ENCODE measurements at regions of chr11 and their contacts with region 1.

Region 1: DNA sequence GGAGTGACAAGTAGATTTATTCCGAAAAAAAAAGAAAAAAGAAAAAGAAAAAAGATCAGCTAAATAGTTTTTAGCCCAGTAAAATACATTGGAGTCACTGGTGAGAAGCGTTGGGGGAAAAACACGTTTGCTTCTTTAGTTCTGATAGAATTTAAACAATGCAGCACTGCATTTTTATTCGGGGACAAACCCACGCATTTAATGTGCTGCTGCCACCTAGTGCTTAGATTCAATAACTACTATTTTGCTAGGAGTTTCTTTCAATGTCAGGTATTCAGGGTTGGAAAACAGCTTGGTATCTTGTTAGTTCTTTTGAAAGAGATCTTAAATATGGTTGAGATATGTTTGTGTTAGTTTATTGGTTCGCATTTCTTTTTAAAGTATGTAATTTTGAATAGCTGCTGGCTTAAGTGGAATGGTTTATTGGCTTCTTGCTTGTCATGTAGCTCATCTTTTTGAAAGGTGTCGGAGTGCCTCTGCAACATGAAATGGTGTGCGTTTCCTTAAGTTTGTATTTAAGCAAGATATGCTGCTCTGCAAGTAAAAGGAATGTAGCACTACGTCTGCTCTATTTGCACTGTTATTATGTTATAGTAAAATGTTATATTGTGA is 41.9 kb downstream of the SVIP start:
- DNase-seq: peak; percentile 49
- H3K4me3 Mint-ChIP-seq: no peak overlapping the region
- H3K27ac Mint-ChIP-seq: no peak overlapping the region
- H3K4me1 Mint-ChIP-seq: no peaks in the 10 kb centered on the region
- H3K27me3 Mint-ChIP-seq: no peaks in the 10 kb centered on the region

Region 2: DNA sequence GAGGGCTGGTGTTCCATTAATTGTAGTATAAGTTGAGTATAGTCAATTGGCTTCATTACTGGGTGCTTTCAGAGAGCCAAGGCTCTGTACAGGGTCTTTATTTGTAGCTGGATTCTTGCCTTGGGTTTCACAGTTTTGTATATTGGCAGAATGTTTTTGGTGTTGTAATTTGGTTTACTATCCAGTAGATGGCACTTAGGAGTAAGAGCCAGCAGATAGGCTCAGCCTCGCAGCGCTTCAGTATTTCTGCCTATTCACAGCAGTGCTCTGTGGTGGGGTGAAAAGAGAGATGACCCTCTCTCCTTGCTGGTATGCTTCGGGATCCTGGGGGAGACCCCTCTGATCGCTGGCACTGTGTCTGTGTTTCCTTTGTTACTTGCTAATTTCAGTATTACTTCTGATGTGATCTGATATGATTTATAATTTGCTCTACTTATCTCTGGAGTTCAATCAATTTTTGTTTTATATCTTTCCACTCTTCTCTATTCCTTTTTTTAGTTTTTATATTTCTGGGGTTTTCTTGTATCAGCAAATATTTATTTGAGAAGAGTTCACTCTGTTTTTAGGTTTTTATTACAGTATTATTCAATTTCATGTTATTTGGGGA is 542.6 kb before region 1 on chr11:
- CTCF ChIA-PET with region 1: interaction called, 4 read pairs
- intact Hi-C with region 1: loop called (anchors 1 kb)
- DNase-seq: peak; percentile 22
- H3K4me3 Mint-ChIP-seq: no peak overlapping the region
- H3K27ac Mint-ChIP-seq: no peak overlapping the region
- H3K4me1 Mint-ChIP-seq: no peaks in the 10 kb centered on the region
- H3K27me3 Mint-ChIP-seq: peaks cover 24% of the 10 kb centered on the region

Region 3: DNA sequence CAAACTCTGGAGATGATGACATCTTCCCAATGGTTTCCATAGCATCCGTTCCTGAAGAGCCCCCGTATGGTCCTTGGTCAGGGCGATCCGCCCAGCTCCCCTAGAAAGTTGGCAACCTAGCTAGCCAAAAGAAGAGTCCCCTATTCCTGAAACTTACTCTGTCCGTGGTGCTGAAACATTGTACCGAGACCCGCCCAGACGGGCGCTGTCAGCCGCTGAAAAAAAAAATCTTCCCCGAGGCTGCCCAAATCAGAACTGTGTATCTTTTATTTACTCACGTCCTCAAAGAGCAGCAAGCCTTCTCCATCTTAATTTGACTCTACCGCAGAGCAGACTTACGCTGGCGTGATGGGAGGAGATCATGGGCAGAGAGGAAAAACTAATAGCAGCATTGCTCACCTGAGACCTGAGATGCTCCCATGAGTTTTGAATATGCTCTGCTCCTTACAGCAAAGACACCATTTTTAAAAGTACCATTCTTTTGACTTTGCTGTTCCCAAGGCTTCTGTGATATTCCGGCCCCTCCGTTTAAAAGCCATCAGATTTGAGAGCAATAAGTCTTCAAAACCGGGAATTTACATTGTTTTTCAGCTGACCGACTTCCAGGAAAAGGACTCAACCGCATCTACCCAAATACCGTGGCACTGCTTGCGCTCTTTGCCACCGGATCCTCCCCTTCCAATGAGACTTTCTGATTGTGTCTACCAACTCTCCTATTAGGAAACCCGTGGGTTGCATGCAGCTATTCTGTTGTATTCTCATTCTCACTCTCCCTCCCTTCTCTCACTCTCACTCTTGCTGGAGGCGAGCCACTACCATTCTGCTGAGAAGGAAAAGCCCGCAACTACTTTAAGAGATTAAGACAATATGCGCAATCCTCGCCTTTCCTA is 449.8 kb before region 1 on chr11 and contains the start of gene SLC17A6:
- CTCF ChIA-PET with region 1: interaction called, 10 read pairs
- intact Hi-C with region 1: loop called (anchors 1 kb)
- DNase-seq: peak; percentile 25
- H3K4me3 Mint-ChIP-seq: no peak within 1 kb of the TSS
- H3K27ac Mint-ChIP-seq: no peak within 1 kb of the TSS
- H3K4me1 Mint-ChIP-seq: peaks cover 22% of the 10 kb centered on the region
- H3K27me3 Mint-ChIP-seq: peaks cover 59% of the 10 kb centered on the region
- total RNA-seq, gene SLC17A6: not detected

Region 4: DNA sequence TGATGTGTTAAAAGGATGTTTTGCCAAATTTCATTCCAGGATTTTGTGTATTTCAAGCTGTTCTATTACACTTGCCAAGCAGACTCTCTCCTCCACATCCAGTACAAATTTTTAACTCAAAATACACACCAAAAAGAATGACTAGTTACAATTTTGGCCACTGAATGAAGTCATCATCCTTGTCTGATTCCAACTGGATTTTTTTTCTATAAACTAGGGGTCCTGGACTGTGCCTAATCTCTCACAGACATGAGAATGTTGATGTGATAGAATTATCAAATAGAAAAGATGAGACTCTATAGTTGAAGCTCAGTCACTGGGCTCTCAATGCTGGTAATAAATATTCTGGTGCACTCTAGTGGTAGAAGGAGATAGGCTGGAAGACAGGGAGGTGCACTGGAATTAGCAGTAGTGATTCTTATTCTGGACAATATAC is 247.8 kb before region 1 on chr11:
- CTCF ChIA-PET with region 1: no interaction called
- intact Hi-C with region 1: loop called (anchors 10 kb)
- DNase-seq: no peak
- H3K4me3 Mint-ChIP-seq: no peak overlapping the region
- H3K27ac Mint-ChIP-seq: no peak overlapping the region
- H3K4me1 Mint-ChIP-seq: no peaks in the 10 kb centered on the region
- H3K27me3 Mint-ChIP-seq: peaks cover 20% of the 10 kb centered on the region

Region 5: GRCh38 chr11:22670830-22671229 is 116.8 kb before region 1 on chr11:
- CTCF ChIA-PET with region 1: interaction called, 18 read pairs
- intact Hi-C with region 1: loop called (anchors 1 kb)
- DNase-seq: no peak
- H3K4me3 Mint-ChIP-seq: no peak overlapping the region
- H3K27ac Mint-ChIP-seq: no peak overlapping the region
- H3K4me1 Mint-ChIP-seq: peaks cover 17% of the 10 kb centered on the region
- H3K27me3 Mint-ChIP-seq: peaks cover 47% of the 10 kb centered on the region

Region 6: DNA sequence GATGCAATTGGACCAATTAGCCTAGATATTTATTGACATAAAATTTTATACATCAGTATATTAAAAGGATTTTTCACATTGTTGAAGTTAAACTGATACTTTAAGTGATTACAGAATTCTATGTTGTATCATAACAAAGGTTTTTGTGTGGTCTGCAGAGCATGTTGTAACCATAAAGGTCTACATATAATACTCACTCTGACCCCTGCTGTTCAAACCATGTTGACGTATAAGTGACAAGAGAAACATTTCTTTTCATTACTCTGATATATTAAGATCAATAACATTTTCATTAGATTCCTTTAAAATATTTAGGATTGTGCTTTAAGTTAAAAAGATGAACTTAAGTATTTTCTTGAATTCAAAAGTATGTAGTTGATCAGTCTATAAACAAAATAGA is 57.3 kb before region 1 on chr11:
- CTCF ChIA-PET with region 1: interaction called, 6 read pairs
- intact Hi-C with region 1: loop called (anchors 5 kb)
- DNase-seq: peak; percentile 11
- H3K4me3 Mint-ChIP-seq: no peak overlapping the region
- H3K27ac Mint-ChIP-seq: no peak overlapping the region
- H3K4me1 Mint-ChIP-seq: no peaks in the 10 kb centered on the region
- H3K27me3 Mint-ChIP-seq: no peaks in the 10 kb centered on the region

Region 7: DNA sequence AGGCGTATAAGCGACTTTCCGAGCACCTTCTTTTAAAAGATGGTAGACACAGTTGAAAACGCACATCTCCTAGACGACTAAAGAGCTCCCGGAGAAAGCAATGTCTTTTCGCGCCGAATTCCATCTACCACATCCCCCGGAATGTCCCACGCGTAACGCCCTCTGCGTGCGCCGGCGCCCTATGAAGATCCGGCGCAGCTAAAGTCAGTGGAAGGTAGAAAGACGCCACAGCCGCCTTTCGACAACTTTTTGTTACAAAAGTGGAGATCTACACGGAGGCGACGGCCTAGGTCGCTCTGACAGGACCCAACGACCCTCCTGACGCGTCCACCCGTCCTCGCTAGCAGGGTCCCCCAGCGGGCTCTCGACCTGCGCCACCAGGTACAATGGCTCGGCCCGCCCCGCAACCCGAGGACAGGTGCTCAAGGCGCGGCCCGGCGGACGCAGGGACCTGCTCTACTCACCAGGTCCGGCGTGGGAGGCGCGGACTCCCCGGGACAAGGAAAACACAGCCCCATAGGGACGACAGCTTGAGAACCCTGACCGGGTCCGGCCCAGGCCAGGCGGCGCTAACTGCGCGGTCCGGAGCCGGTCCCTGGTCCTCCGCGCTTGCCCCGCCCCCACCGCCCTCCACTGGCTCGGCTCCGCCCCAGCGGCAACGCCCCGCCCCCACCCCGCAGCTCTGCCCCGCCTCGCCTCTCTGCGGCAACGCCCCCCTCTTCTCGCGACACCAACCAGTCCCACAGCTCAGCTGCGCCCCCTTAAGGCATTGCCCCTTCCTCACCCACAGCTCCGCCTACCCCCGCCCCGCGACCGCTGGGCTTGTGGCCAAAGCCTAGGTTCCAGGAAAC is 41.8 kb after region 1 on chr11 and contains the start of gene SVIP:
- CTCF ChIA-PET with region 1: interaction called, 13 read pairs
- intact Hi-C with region 1: loop called (anchors 2 kb)
- DNase-seq: peak; percentile 96
- H3K4me3 Mint-ChIP-seq: peak within 1 kb of the TSS; percentile 88
- H3K27ac Mint-ChIP-seq: peak within 1 kb of the TSS; percentile 86
- H3K4me1 Mint-ChIP-seq: peaks cover 13% of the 10 kb centered on the region
- H3K27me3 Mint-ChIP-seq: no peaks in the 10 kb centered on the region
- total RNA-seq, gene SVIP: 81.2 to 84.2 TPM

Measured in activated naive CD4-positive, alpha-beta T cell treated with anti-CD3 and anti-CD28 coated beads for 36 hours (primary cell).